Activated T-helper 2 cell treated with anti-CD3 and anti-CD28 coated beads, Interferon-gamma antibody, Interleukin-2, Interleukin-4, amounts not matched to agents 10 μg/mL and 5 μg/mL and 100 μg/mL, durations not matched to agents 14 hours and 24 hours and 36 hours (primary cell): ENCODE measurements at regions of chr10 and their contacts with region 1.

Region 1: DNA sequence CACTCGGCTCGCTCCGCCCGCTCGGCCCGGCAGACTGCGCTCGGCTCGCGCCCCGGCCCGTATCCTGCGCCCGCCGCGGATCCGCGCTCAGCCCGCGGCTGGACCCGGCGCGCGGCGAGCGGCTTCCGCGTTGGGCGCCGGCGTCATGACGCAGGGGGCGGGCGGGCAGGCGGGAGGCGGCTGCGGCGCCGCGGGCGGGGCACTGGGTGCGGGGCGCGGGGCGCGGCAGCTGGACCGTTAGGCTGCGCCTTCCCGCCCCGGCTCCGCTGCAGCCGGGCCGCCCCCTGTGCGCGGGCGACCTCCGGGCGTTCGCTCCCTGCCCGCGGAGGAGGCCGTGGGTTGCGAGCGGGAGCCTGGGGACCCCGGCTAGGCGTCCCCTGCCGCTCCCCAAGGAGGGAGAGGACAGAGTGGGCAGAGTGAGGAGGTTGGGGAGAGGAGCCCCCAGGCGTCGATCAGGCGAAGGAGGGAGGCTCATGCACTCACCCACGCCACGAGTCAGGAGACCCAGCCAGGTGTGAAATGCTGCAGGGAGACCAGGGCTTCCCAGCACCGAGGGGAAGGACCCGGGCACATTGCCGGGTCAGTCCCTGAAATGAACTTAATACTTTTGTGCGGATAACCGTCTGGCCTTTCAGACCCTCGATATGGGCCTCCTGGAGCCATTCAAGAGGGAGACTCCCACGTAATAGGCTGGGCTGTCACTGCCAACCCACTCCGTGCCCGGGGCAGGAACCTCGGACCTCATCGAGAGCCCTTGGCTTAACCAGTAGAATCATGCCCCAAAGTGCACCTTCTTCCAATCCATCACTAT is at the start of gene PIP4K2A:
- DNase-seq: peak; percentile 70
- H3K4me3 Mint-ChIP-seq: peak within 1 kb of the TSS; percentile 85
- H3K27ac Mint-ChIP-seq: peak within 1 kb of the TSS; percentile 58
- H3K4me1 Mint-ChIP-seq: peaks cover 33% of the 10 kb centered on the region
- H3K27me3 Mint-ChIP-seq: peaks cover 6% of the 10 kb centered on the region
- total RNA-seq, gene PIP4K2A: 104 and 105 TPM in 2 replicates

Region 2: DNA sequence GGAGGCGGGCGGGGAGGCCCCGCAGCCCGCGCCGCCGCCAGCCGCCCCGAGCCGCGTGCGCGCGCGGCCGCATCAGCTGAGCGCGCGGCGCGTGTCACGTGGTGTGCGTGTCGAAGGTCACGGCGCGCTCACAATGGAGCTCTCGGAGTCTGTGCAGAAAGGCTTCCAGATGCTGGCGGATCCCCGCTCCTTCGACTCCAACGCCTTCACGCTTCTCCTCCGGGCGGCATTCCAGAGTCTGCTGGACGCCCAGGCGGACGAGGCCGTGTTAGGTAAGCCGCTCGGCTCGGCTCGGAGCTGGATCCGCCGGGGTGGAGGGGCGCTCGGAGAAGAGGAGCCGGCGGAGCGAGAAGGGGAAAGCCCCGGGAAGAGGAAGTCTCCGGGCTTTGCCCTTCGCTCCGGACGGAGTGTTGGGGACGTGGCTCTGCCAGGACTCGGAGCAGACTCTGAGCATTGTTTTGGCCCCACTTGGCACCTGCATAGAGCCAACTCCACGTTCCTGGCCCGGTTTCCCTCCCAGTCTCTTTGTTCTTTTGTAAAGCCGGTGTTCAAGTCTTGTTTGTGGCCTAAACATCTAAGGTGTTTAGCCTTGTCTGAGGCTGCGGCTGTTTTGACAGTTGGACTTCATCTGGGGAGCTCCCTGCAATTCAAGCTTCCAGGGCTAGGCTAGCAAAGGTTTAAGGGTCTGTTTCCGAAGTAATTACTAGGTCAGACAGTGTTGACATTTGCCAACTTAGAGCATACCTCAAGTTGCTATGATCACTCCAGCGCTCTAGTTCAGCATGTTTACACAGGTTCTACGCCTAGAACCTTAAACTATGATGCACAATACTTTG is 398.2 kb before region 1 on chr10 and contains the start of gene COMMD3:
- intact Hi-C with region 1: loop called (anchors 5 kb)
- DNase-seq: peak; percentile 79
- H3K4me3 Mint-ChIP-seq: peak within 1 kb of the TSS; percentile 88
- H3K27ac Mint-ChIP-seq: peak within 1 kb of the TSS; percentile 88
- H3K4me1 Mint-ChIP-seq: peaks cover 40% of the 10 kb centered on the region
- H3K27me3 Mint-ChIP-seq: peaks cover 1% of the 10 kb centered on the region
- total RNA-seq, gene COMMD3: 92.1 and 105 TPM in 2 replicates

Region 3: DNA sequence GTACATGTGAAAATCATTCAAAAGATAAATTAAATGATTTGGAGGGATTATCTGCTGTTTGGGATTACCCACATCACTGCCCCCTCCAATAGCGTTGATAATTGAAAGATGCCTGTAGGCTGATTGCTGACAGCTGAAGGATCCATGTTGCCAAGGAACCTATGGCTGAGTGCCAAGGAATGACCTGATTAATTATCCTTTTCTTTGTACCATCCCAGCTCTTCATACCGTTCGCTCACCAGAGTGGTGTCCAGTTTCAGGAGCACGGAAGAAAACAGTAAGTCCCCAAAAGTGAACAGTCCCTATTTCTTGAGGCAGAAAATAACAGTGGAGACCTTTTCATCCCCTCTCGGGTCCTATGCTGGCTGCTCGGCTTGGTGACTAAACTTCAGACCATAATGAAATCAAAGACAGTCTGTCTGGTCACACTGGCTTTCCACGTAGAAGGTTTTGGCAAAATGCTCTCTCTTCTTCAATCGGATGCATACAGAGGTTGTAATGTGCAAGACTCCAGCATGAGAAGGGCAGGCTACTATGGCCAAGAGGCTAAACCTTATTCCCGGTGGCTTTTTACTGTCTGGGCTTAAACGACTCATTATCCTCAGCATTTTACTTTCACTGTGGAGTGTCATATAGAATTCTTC is 260.6 kb before region 1 on chr10:
- intact Hi-C with region 1: no loop called
- DNase-seq: no peak
- H3K4me3 Mint-ChIP-seq: no peak overlapping the region
- H3K27ac Mint-ChIP-seq: no peak overlapping the region
- H3K4me1 Mint-ChIP-seq: peaks cover 6% of the 10 kb centered on the region
- H3K27me3 Mint-ChIP-seq: no peaks in the 10 kb centered on the region

Region 4: GRCh38 chr10:22630234-22631174 is 84.2 kb before region 1 on chr10:
- intact Hi-C with region 1: loop called (anchors 1 kb)
- DNase-seq: peak; percentile 41
- H3K4me3 Mint-ChIP-seq: peak overlapping the region; percentile 70
- H3K27ac Mint-ChIP-seq: peak overlapping the region; percentile 95
- H3K4me1 Mint-ChIP-seq: peaks cover 87% of the 10 kb centered on the region
- H3K27me3 Mint-ChIP-seq: no peaks in the 10 kb centered on the region

Region 5: GRCh38 chr10:22666287-22667092 is 48.2 kb before region 1 on chr10:
- intact Hi-C with region 1: loop called (anchors 2 kb)
- DNase-seq: peak; percentile 51
- H3K4me3 Mint-ChIP-seq: peak overlapping the region; percentile 74
- H3K27ac Mint-ChIP-seq: peak overlapping the region; percentile 82
- H3K4me1 Mint-ChIP-seq: peaks cover 56% of the 10 kb centered on the region
- H3K27me3 Mint-ChIP-seq: no peaks in the 10 kb centered on the region

Region 6: GRCh38 chr10:22780474-22780885 is 65.8 kb after region 1 on chr10:
- intact Hi-C with region 1: no loop called
- DNase-seq: no peak
- H3K4me3 Mint-ChIP-seq: no peak overlapping the region
- H3K27ac Mint-ChIP-seq: no peak overlapping the region
- H3K4me1 Mint-ChIP-seq: no peaks in the 10 kb centered on the region
- H3K27me3 Mint-ChIP-seq: peaks cover 6% of the 10 kb centered on the region

Region 7: GRCh38 chr10:23095404-23095965 is 380.8 kb after region 1 on chr10 and contains the start of gene MSRB2:
- intact Hi-C with region 1: loop called (anchors 10 kb)
- DNase-seq: peak; percentile 66
- H3K4me3 Mint-ChIP-seq: peak within 1 kb of the TSS; percentile 88
- H3K27ac Mint-ChIP-seq: peak within 1 kb of the TSS; percentile 83
- H3K4me1 Mint-ChIP-seq: peaks cover 41% of the 10 kb centered on the region
- H3K27me3 Mint-ChIP-seq: peaks cover 17% of the 10 kb centered on the region
- total RNA-seq, gene MSRB2: 4.0 and 4.4 TPM in 2 replicates